K562 (cell line): ENCODE measurements at regions of chr4 and their contacts with region 1.

Region 1: DNA sequence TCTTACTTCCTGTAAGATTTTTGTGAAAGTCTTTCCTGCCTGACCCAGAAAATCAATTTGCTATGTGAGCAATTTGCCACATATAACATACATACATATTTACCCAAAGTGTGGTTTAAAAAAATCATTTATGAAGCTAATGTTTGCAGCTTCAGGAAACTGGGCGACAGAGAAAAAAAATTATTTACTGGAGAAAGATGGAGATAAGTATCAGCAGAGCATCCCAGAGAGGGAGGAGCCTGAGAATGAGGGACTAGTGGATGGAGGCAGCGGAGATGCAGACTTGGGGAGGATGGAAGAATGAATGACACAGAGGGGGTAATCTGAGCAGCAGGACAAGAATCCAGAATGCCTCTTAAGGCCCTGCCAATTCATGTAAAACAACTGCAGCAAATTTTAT is 975 bp upstream of the GYPA start:
- DNase-seq: peak in 1 of 4 experiments; percentile 15
- ATAC-seq: no peak
- H3K4me3 ChIP-seq: no peak overlapping the region
- H3K27ac ChIP-seq: no peak overlapping the region
- H3K4me1 ChIP-seq: peaks cover 0 to 5% of the 10 kb centered on the region in 2 experiments; a peak in 2 of 5 replicates
- H3K27me3 ChIP-seq: no peaks in the 10 kb centered on the region
- CTCF ChIP-seq: no peak
- EP300 ChIP-seq: no peak
- POLR2A ChIP-seq: no peak
- RAD21 ChIP-seq: no peak

Region 2: GRCh38 chr4:143184217-143185116 is 957.0 kb before region 1 on chr4 and contains the start of gene USP38:
- CTCF ChIA-PET with region 1: no interaction called
- POLR2A ChIA-PET with region 1: no interaction called
- in situ Hi-C with region 1: no loop called
- intact Hi-C with region 1: loop called (anchors 5 kb)
- DNase-seq: peak; percentile 91 to 96 (median 94)
- ATAC-seq: peak; percentile 88
- H3K4me3 ChIP-seq: peak within 1 kb of the TSS; percentile 83
- H3K27ac ChIP-seq: peak within 1 kb of the TSS; percentile 92
- H3K4me1 ChIP-seq: peaks cover 0 to 8% of the 10 kb centered on the region in 2 experiments; a peak in 3 of 5 replicates
- H3K27me3 ChIP-seq: no peaks in the 10 kb centered on the region
- CTCF ChIP-seq: peak in 2 of 3 experiments; percentile 8 to 12; a peak in 1 of 6 replicates
- EP300 ChIP-seq: no peak
- POLR2A ChIP-seq: peak; percentile 93
- RAD21 ChIP-seq: no peak
- polyA plus RNA-seq, gene USP38: 4.2 to 4.7 TPM

Region 3: DNA sequence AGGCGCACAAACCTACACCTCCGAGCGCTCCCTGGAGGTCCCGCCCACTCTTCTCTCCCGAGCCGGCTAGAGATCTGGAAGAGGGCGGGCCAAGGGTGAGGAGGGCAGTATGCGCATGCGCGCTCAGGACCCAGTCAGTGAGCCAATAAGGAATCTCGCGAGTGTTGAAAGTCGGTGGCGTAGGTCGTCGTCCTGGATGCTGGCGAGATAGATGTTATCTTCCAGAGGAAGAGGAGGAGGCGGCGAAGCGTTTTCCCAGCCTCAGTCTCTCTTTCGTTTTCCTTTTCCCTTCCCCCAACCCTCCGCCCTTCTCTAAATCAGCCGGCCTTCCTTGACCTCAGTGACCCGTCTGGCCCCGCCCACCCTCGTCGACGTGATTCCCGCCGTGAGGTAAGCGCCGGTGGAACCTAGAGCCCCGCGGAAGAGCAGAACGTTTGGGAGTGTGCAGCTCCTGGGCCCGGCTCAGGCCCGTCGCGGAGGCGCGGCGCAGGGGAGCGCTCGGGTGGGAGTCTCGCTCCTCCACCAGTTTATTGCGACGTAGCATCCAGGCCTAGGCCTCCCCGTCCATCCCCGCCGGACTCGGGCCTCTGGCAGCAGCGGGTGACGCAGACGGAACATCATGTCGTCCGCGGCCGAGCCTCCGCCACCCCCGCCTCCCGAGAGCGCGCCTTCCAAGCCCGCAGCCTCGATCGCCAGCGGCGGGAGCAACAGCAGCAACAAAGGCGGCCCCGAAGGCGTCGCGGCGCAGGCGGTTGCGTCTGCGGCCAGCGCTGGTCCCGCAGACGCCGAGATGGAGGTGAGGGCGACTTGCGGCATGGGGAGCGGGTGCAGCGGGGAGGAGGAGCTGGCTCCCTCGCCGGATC is 628.0 kb before region 1 on chr4 and contains the start of gene SMARCA5:
- CTCF ChIA-PET with region 1: no interaction called
- POLR2A ChIA-PET with region 1: no interaction called
- in situ Hi-C with region 1: no loop called
- intact Hi-C with region 1: loop called (anchors 10 kb)
- DNase-seq: peak; percentile 98 to 99 (median 99)
- ATAC-seq: peak; percentile 87
- H3K4me3 ChIP-seq: peak within 1 kb of the TSS; percentile 81
- H3K27ac ChIP-seq: peak within 1 kb of the TSS; percentile 87
- H3K4me1 ChIP-seq: peaks cover 0 to 8% of the 10 kb centered on the region in 2 experiments; a peak in 3 of 5 replicates
- H3K27me3 ChIP-seq: no peaks in the 10 kb centered on the region
- CTCF ChIP-seq: no peak; a peak in 2 of 6 replicates
- EP300 ChIP-seq: no peak
- POLR2A ChIP-seq: peak; percentile 81
- RAD21 ChIP-seq: no peak
- polyA plus RNA-seq, gene SMARCA5: 21.6 to 23.1 TPM

Region 4: GRCh38 chr4:143773998-143774895 is 367.2 kb before region 1 on chr4:
- CTCF ChIA-PET with region 1: interaction called, 3 read pairs
- POLR2A ChIA-PET with region 1: no interaction called
- in situ Hi-C with region 1: no loop called
- intact Hi-C with region 1: loop called (anchors 1 kb)
- DNase-seq: peak; percentile 50 to 88 (median 71)
- ATAC-seq: peak; percentile 99
- H3K4me3 ChIP-seq: no peak overlapping the region
- H3K27ac ChIP-seq: no peak overlapping the region; the same call in 2 of the 3 replicates
- H3K4me1 ChIP-seq: peaks cover 3 to 7% of the 10 kb centered on the region in 2 experiments; a peak in 3 of 5 replicates
- H3K27me3 ChIP-seq: no peaks in the 10 kb centered on the region
- CTCF ChIP-seq: peak; percentile 94
- EP300 ChIP-seq: peak; percentile 60
- POLR2A ChIP-seq: no peak
- RAD21 ChIP-seq: peak; percentile 96 to 98

Region 5: GRCh38 chr4:144014808-144015207 is 126.7 kb before region 1 on chr4:
- CTCF ChIA-PET with region 1: no interaction called
- POLR2A ChIA-PET with region 1: no interaction called
- in situ Hi-C with region 1: loop called (anchors 10 kb)
- intact Hi-C with region 1: loop called (anchors 5 kb)
- DNase-seq: no peak
- ATAC-seq: no peak
- H3K4me3 ChIP-seq: no peak overlapping the region
- H3K27ac ChIP-seq: no peak overlapping the region
- H3K4me1 ChIP-seq: no peaks in the 10 kb centered on the region; a peak in 1 of 5 replicates
- H3K27me3 ChIP-seq: no peaks in the 10 kb centered on the region
- CTCF ChIP-seq: no peak
- EP300 ChIP-seq: no peak
- POLR2A ChIP-seq: no peak
- RAD21 ChIP-seq: no peak

Region 6: DNA sequence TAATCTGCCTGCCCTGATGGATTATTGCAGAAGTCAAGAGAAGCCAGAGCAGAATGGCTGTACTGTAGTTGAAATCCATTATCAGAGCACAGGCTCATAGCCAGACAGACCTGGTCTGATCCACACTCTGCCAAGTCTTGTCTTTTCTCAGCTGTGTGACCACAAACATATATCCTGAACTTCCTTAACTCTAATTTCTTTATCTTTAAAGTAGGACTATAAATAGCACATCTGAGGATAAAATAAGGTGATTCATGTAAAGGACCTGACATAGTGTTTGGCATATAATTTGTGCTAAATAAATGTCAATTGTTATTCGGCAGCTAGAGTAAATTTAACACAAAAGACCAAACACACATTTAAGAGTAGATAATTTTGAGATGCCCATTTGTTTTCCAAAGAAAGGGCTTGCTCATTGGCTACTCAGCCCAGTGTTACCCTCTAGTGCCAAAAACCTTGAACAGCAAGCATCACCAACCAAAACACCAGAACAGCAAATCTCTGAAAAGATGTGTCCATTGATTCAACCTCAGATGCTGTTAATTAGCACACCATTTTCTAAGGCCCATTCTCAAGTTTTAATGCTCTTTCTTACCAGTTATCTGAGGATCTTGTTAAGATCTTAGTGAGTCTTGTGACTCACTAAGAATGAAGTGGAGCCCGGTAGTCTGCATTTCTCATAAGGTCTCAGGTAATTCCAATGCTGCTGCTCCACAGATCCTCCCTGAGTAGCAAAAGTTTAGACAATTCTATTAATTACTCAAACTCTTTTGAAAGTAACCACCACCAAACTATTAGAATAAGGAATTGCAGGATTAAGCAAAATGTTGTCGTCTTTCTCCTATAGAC is 613.3 kb after region 1 on chr4:
- CTCF ChIA-PET with region 1: no interaction called
- POLR2A ChIA-PET with region 1: no interaction called
- in situ Hi-C with region 1: no loop called
- intact Hi-C with region 1: no loop called
- DNase-seq: no peak
- ATAC-seq: 0 out of 3 replicates have a peak, but pooled peaks have one; percentile 53
- H3K4me3 ChIP-seq: no peak overlapping the region
- H3K27ac ChIP-seq: no peak overlapping the region
- H3K4me1 ChIP-seq: no peaks in the 10 kb centered on the region
- H3K27me3 ChIP-seq: no peaks in the 10 kb centered on the region
- CTCF ChIP-seq: peak in 2 of 3 experiments; percentile 12 to 13; a peak in 2 of 6 replicates
- EP300 ChIP-seq: no peak
- POLR2A ChIP-seq: no peak
- RAD21 ChIP-seq: no peak